Heart right ventricle (tissue), 16 donors: ENCODE measurements at regions of chr16 and their contacts with region 1.

Region 1: GRCh38 chr16:88194397-88195268 is 188.1 kb upstream of the ZNF469 start:
- DNase-seq: no peak
- ATAC-seq: peak in 4 of 8 donors; percentile 16 to 32 (median 30)
- H3K4me3 ChIP-seq: no peak overlapping the region
- H3K27ac ChIP-seq: no peak overlapping the region
- H3K4me1 ChIP-seq: peaks cover 0 to 3% (median 0%) of the 10 kb centered on the region in 9 donors
- H3K27me3 ChIP-seq: no peaks in the 10 kb centered on the region
- CTCF ChIP-seq: no peak

Region 2: DNA sequence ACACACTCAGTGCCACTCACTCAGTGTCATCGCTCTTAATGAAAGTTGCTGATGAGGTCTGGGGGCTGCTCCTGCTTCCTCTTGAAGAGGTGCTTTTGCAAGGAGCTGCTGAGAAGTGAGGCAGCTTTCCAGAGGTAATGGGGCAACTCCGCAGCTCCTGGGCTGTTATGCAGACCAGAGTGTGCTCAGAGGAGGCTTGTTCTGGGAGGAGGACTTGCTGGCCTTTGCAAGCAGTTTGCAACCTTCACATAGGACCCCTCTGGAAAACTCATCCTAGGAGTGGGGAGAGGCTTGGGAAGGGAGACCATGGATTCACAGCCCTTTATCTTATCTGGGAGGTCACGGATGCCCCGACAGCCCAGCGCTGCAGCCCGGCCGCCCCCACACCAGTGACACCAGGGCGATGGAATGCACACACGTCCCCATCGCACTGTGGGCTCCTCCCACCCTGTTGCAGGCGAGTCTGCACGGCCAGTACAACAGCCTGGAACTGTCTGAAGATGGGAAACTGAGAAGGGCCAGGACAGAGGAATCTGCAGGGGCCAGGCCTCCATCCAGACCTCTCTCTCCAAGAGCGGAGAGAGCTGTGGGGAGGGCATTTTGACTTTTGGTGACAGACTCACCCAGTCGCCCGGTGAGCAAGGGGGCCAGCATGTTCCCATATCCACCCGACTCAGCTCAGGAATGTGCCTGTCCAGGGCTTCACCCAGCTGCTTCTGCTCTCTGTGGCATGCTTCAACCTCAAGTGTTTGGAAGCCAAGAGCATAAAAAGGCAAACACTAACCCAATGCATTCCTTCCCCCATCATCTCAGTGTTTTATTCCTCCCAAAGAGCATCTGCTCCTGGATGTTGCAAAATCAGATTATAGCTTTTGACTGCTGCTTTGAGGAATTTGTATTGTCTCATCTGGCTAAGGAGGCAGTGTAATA is 109.5 kb after region 1 on chr16:
- intact Hi-C with region 1: no loop called
- DNase-seq: no peak
- ATAC-seq: peak in 7 of 8 donors; percentile 62 to 80 (median 74)
- H3K4me3 ChIP-seq: no peak overlapping the region
- H3K27ac ChIP-seq: peak overlapping the region in 1 of 10 donors; percentile 31
- H3K4me1 ChIP-seq: peaks cover 0 to 23% (median 9%) of the 10 kb centered on the region in 9 donors
- H3K27me3 ChIP-seq: peaks cover 0 to 12% (median 0%) of the 10 kb centered on the region in 7 donors
- CTCF ChIP-seq: no peak

Region 3: DNA sequence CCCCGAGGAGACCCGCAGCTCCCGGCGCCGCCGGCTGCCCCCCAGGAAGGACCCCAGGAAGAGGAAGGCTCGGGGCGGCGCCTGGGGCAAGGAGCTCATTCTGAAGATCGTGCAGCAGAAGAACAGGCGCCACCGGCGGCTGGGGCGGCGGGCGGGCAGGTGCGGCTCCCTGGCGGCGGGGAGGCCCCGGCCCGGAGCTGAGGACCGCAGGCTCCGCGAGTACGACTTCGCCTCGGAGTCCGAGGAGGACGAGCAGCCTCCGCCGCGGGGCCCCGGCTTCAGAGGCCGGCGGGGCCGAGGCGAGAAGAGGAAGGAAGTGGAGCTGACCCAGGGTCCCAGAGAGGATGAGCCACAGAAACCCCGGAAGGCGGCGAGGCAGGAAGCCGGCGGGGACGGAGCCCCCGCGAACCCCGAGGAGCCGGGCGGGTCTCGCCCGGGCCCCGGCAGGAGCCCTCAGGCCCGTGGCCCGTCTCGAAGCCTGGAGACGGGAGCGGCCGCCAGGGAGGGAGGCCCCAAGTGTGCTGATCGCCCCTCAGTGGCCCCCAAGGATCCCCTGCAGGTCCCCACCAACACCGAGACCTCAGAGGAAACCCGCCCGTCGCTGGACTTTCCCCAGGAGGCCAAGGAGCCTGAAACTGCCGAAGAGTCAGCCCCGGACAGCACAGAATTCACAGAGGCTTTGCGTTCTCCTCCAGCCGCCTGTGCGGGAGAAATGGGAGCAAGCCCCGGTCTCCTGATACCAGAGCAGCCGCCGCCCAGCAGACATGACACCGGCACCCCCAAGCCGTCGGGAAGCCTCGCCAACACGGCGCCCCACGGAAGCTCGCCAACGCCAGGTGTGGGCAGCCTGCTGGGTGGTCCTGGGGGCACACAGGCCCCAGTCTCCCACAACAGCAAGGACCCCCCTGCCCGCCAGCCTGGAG is 236.2 kb after region 1 on chr16:
- intact Hi-C with region 1: loop called (anchors 5 to 10 kb)
- DNase-seq: peak; percentile 20 to 49
- ATAC-seq: peak in 7 of 8 donors; percentile 2 to 70 (median 22)
- H3K4me3 ChIP-seq: peak overlapping the region; percentile 16 to 72 (median 56)
- H3K27ac ChIP-seq: peak overlapping the region in 7 of 10 donors; percentile 50 to 89 (median 65)
- H3K4me1 ChIP-seq: peaks cover 0 to 26% (median 14%) of the 10 kb centered on the region in 9 donors
- H3K27me3 ChIP-seq: peaks cover 9 to 48% (median 34%) of the 10 kb centered on the region in 7 donors
- CTCF ChIP-seq: no peak

Region 4: DNA sequence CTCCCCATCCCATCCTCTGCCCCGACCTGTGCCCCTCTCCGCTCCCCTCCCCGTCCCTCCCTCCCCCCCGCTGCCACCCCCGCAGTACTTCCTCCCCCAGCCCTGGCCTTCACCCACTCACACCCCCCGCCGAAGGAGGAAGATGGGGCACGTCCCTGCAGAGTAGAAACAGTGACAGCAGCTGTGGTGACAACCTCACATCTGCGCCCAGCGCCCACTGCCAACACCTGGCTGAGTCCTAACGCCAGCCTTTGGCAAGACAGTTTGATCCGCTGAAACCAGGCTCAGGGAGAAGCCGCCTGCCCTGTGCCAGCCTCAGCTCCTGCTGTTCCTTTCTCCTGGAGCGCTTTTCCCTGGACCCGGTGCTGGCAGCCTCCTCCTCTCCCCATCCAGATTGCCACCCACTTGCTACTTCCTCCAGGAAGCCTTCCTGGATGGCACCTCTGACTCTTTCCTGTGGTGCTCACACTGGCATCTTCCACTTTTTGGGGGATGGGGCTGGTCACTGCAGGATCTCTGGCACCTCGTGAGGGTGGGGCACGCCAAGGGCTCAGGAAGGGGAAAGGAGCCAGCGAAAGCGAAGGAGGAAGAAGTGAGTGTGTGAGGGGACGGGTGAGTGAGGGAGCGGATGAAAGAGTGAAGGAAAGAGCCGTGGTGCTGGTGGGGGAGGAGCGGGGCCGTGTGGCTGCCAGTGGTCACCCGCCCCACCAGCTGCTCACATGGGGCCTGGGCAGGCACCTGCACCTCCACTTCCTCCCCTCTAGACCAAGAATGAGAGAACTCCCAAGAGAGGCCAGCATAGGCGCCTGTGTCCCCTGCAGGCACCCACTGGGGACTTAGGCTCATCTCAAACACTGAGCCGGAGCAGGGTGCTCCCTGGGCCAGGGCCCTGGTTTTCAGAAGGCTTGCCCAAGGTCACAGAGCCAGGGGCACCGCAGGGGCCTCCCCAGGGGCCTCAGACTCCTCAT is 285.4 kb after region 1 on chr16:
- intact Hi-C with region 1: no loop called
- DNase-seq: no peak
- ATAC-seq: peak in 5 of 8 donors; percentile 14 to 74 (median 50)
- H3K4me3 ChIP-seq: no peak overlapping the region
- H3K27ac ChIP-seq: no peak overlapping the region
- H3K4me1 ChIP-seq: peaks cover 0 to 26% (median 6%) of the 10 kb centered on the region in 9 donors
- H3K27me3 ChIP-seq: no peaks in the 10 kb centered on the region
- CTCF ChIP-seq: no peak

Region 5: DNA sequence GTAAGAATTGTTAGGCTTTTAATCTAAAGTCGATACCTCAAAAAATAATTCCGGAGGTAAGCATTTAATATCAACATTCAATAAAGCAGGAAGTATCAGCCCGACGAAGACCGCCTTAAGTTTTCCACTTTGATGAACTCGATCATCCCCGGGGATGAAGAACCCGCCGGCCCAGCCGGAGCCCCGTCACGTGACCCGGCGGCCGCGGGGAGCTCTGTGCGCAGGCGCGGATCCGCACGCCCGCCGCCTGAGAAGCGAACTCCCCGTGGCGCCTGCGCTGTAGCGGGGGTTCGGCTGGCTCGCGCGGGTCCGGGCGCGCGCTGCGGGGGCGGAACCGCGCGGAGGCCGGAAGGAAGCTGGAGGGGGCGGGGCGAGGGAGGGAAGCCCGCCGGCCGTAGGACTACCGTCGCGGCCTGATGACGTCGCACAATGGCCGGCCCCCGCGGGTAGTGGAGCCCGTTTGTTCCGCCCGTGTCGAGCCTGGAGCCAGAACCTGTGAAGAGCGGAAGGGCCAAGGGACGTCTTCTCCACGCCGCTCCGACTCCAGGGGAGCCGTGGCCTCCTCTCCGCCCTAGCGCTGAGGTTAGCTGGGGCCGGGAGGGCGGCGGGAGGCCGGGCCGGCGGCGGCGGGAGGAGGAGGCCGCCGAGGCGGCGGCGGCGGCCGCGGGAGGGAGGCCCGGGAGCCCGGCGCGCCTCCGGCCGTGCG is 375.5 kb after region 1 on chr16 and contains the start of gene ZC3H18:
- intact Hi-C with region 1: no loop called
- DNase-seq: peak; percentile 97 to 98
- ATAC-seq: peak; percentile 97 to 99 (median 98)
- H3K4me3 ChIP-seq: peak within 1 kb of the TSS; percentile 67 to 96 (median 91)
- H3K27ac ChIP-seq: peak within 1 kb of the TSS; percentile 33 to 92 (median 84)
- H3K4me1 ChIP-seq: peaks cover 6 to 30% (median 25%) of the 10 kb centered on the region in 9 donors
- H3K27me3 ChIP-seq: no peaks in the 10 kb centered on the region
- CTCF ChIP-seq: no peak
- total RNA-seq, gene ZC3H18: 18.3 to 28.7 (median 22.0) TPM